ENCODE measurements at regions of chr5 and their contacts with region 1.

Region 1: GRCh38 chr5:923281-923873 is 30.7 kb downstream of the TRIP13 start:
- DNase-seq: no peak
- H3K4me3 ChIP-seq: no peak overlapping the region
- H3K27ac ChIP-seq: no peak overlapping the region
- H3K4me1 ChIP-seq: peaks cover 6 to 21% (median 20%) of the 10 kb centered on the region in 4 donors
- H3K27me3 ChIP-seq: peaks cover 0 to 27% (median 4%) of the 10 kb centered on the region in 4 donors
- CTCF ChIP-seq: peak; percentile 81 to 94 (median 82)
- EP300 ChIP-seq: no peak
- POLR2A ChIP-seq: no peak

Region 2: DNA sequence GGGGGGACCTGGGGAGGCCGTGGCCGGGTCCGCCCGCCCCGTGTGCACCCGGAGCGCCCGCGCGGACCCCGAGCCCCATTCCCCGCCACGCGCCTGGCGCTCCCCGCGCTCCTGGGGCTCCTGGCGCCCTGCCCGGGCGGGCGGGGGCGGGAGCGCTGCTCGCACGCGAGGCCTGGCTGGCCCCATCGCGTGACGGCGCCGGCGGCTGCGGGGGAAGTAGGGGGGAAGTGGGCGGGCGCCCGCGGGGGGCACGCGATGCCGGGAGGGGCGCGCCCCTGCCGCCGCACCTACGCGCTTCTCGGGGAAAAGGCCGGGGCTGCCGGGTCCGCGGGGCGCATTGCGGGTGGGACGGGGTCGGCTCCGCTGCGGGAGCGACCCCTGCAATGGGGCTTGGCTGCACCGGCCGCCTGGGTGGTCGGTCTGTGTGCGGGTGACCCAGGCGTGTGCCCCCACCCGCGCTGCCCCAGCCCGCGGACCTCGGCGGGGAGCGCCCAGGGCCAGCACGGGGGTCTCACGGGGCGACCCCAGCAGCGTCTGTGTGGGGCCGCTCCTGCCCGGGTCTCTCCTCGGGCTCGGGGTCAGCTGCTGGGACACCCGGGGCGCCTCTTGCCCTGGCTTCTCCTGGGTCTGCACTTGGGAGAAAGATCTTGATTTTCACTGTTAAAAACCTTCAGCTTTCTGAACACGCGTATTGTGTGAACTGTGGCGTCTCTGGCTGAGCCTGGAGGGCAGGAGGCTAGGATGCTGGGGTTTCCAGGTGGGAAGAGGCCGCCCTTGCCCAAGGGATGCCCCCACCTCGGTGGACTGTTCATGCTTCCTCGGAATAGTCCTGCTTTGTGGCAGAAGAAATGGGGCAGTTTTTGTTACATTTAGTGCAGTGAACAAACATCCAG is 549.4 kb before region 1 on chr5:
- intact Hi-C with region 1: no loop called
- DNase-seq: peak; percentile 34
- H3K4me3 ChIP-seq: peak overlapping the region; percentile 52 to 59 (median 54)
- H3K27ac ChIP-seq: peak overlapping the region in 1 of 4 donors; percentile 16
- H3K4me1 ChIP-seq: peaks cover 5 to 25% (median 16%) of the 10 kb centered on the region in 4 donors
- H3K27me3 ChIP-seq: peaks cover 0 to 36% (median 5%) of the 10 kb centered on the region in 4 donors
- CTCF ChIP-seq: no peak
- EP300 ChIP-seq: no peak
- POLR2A ChIP-seq: no peak

Region 3: GRCh38 chr5:1004461-1005248 is 81.3 kb after region 1 on chr5:
- intact Hi-C with region 1: loop called (anchors 5 kb)
- DNase-seq: no peak
- H3K4me3 ChIP-seq: peak overlapping the region; percentile 69 to 73 (median 71)
- H3K27ac ChIP-seq: peak overlapping the region; percentile 71 to 79 (median 76)
- H3K4me1 ChIP-seq: peaks cover 15 to 46% (median 41%) of the 10 kb centered on the region in 4 donors
- H3K27me3 ChIP-seq: peaks cover 0 to 46% (median 13%) of the 10 kb centered on the region in 4 donors
- CTCF ChIP-seq: peak; percentile 34 to 46 (median 41)
- EP300 ChIP-seq: no peak
- POLR2A ChIP-seq: no peak

Region 4: GRCh38 chr5:1140171-1140817 is 216.9 kb after region 1 on chr5:
- intact Hi-C with region 1: loop called (anchors 2 kb)
- DNase-seq: no peak
- H3K4me3 ChIP-seq: no peak overlapping the region
- H3K27ac ChIP-seq: no peak overlapping the region
- H3K4me1 ChIP-seq: peaks cover 8 to 17% (median 10%) of the 10 kb centered on the region in 4 donors
- H3K27me3 ChIP-seq: peaks cover 0 to 32% (median 0%) of the 10 kb centered on the region in 4 donors
- CTCF ChIP-seq: peak; percentile 76 to 91 (median 83)
- EP300 ChIP-seq: no peak
- POLR2A ChIP-seq: no peak